ENCODE measurements at regions of chr13 and their contacts with region 1.

Region 1: GRCh38 chr13:20814224-20814910 is 40.6 kb upstream of the EEF1AKMT1 start:
- DNase-seq: peak; percentile 80 to 97
- H3K4me3 ChIP-seq: no peak overlapping the region
- CTCF ChIP-seq: no peak
- POLR2A ChIP-seq: no peak

Region 2: GRCh38 chr13:20713751-20714150 is 100.6 kb before region 1 on chr13:
- intact Hi-C with region 1: loop called (anchors 10 kb)
- DNase-seq: no peak
- H3K4me3 ChIP-seq: no peak overlapping the region
- CTCF ChIP-seq: no peak
- POLR2A ChIP-seq: no peak